Sigmoid colon (tissue), 7 donors: ENCODE measurements at regions of chr6 and their contacts with region 1.

Region 1: DNA sequence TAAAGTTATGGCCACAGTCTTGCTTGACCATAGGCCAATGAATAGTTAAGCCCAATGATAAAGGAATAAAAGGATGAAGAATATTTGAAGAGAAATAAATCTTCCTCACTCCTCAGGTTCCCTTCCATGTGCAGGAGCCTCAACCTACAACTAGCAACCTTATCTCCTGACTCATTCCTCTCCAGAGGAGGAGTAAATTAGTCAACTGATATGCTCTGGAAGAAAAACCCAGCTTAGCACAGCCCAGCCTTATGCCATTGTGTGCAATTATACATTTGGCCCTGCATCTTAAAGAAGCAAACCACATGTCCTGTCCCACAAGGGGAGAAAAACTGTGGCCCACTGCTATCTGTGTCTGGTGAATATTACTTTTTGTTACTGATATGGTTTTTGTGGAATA is 82.1 kb downstream of the PHIP start:
- DNase-seq: no peak
- H3K4me3 ChIP-seq: no peak overlapping the region
- H3K27ac ChIP-seq: no peak overlapping the region
- H3K4me1 ChIP-seq: no peaks in the 10 kb centered on the region
- H3K27me3 ChIP-seq: no peaks in the 10 kb centered on the region
- CTCF ChIP-seq: no peak
- EP300 ChIP-seq: no peak
- POLR2A ChIP-seq: no peak

Region 2: GRCh38 chr6:78951471-78951870 is 44.5 kb before region 1 on chr6:
- intact Hi-C with region 1: loop called (anchors 10 kb)
- DNase-seq: no peak
- H3K4me3 ChIP-seq: no peak overlapping the region
- H3K27ac ChIP-seq: no peak overlapping the region
- H3K4me1 ChIP-seq: no peaks in the 10 kb centered on the region
- H3K27me3 ChIP-seq: no peaks in the 10 kb centered on the region
- CTCF ChIP-seq: no peak
- EP300 ChIP-seq: no peak
- POLR2A ChIP-seq: no peak

Region 3: DNA sequence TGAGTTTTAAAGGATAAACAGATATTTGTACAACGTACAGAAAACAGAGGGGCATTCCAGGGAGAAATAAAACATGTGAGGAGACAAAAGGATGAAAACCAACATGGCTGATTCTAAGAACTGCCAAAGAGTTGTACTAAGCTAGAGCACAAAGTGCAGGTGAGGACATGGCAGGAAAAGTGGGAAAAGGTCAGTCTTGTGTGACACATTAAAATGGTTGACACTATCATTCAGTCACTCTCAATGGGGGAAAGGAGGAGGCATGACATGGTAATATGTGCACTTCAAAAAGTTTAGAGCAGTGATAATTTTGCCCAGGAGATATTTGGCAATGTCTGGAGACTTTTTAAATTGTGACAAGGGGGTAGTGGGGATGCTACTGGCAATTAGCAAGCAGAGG is 60.3 kb after region 1 on chr6:
- intact Hi-C with region 1: loop called (anchors 10 kb)
- DNase-seq: no peak
- H3K4me3 ChIP-seq: no peak overlapping the region
- H3K27ac ChIP-seq: no peak overlapping the region
- H3K4me1 ChIP-seq: no peaks in the 10 kb centered on the region
- H3K27me3 ChIP-seq: no peaks in the 10 kb centered on the region
- CTCF ChIP-seq: no peak
- EP300 ChIP-seq: no peak
- POLR2A ChIP-seq: no peak

Region 4: GRCh38 chr6:79117752-79118151 is 121.8 kb after region 1 on chr6:
- intact Hi-C with region 1: no loop called
- DNase-seq: no peak
- H3K4me3 ChIP-seq: no peak overlapping the region
- H3K27ac ChIP-seq: no peak overlapping the region
- H3K4me1 ChIP-seq: no peaks in the 10 kb centered on the region
- H3K27me3 ChIP-seq: no peaks in the 10 kb centered on the region
- CTCF ChIP-seq: no peak
- EP300 ChIP-seq: no peak
- POLR2A ChIP-seq: no peak